ENCODE measurements at regions of chr19 and their contacts with region 1.

Region 1: GRCh38 chr19:10388957-10389356 is 8.6 kb upstream of the TYK2 start:
- DNase-seq: peak; percentile 91
- H3K4me3 ChIP-seq: no peak overlapping the region
- H3K27ac ChIP-seq: no peak overlapping the region
- H3K4me1 ChIP-seq: peaks cover 0 to 4% (median 4%) of the 10 kb centered on the region in 4 donors
- H3K27me3 ChIP-seq: no peaks in the 10 kb centered on the region
- CTCF ChIP-seq: peak; percentile 78 to 94 (median 86)
- EP300 ChIP-seq: no peak
- POLR2A ChIP-seq: no peak

Region 2: GRCh38 chr19:10269333-10270179 is 119.4 kb before region 1 on chr19:
- intact Hi-C with region 1: loop called (anchors 1 kb)
- DNase-seq: peak; percentile 89
- H3K4me3 ChIP-seq: peak overlapping the region; percentile 15 to 46 (median 42)
- H3K27ac ChIP-seq: peak overlapping the region; percentile 66 to 80 (median 70)
- H3K4me1 ChIP-seq: peaks cover 0 to 20% (median 19%) of the 10 kb centered on the region in 4 donors
- H3K27me3 ChIP-seq: peaks cover 14 to 30% (median 22%) of the 10 kb centered on the region in 3 donors
- CTCF ChIP-seq: peak; percentile 86 to 95 (median 92)
- EP300 ChIP-seq: no peak
- POLR2A ChIP-seq: no peak